ENCODE measurements at regions of chr5 and their contacts with region 1.

Region 1: DNA sequence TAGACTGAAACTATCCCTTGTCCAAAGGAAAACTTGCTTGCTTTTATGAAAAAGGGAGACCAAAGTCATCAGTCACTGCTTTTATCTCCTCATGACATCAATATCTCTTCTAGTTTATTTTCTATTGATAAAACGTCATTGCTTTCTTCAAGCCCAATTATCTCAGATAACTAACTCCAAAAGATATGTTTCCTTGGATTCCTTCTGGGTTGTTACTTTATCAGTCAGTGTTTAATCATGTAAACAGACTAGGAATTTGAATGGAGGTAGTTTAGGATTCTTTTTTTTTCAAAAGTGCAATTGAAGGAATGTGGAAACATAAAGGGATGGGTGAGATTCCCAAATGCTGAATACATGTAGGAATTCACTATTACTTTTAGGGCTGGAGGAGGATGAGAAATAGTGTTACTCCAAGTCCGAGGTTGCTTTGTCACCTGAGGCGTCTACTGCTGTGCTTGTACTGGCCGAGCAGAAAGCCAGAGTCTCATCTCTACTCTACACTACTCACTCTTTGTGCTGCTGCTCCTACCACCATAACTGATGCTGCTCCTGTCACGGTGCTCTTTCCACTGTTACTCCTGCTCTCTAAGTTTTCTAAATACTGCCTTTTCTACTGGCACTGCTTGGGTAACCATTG is 1697.1 kb upstream of the NUDT12 start:
- DNase-seq: peak; percentile 3 to 34
- H3K4me3 ChIP-seq: no peak overlapping the region
- H3K4me3 Mint-ChIP-seq: peak overlapping the region; percentile 1
- H3K27ac Mint-ChIP-seq: no peak overlapping the region
- H3K4me1 ChIP-seq: peaks cover 15% of the 10 kb centered on the region
- H3K4me1 Mint-ChIP-seq: peaks cover 21% of the 10 kb centered on the region
- H3K27me3 ChIP-seq: no peaks in the 10 kb centered on the region
- H3K27me3 Mint-ChIP-seq: no peaks in the 10 kb centered on the region
- CTCF ChIP-seq: no peak

Region 2: DNA sequence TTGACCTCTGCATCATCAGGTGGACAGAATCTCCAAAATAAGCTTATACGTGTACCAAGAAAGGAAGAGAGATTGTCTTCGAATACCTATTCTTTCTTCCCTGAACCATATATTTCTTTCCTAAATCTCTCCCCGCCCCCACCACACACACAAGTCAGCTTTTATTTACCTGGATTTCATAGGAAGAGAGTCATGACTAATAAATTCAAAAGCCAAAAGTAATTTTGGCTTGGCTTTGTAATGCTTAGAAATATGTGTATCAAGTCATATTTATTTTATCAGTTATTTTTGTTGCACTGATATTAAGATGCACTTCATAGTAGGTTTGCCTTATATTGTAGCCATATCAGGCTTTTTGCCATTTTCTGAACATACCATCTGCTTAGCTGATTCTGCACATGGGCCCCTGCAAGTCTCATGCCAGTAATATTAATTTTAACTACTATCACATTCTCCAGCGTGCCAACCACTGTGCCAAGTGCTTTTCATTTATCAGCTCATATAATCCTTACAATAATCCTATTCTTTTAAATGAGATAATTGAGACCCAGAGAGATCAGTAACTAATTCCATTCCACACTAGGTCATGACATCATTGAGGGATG is 291.8 kb before region 1 on chr5:
- CTCF ChIA-PET with region 1: no interaction called
- POLR2A ChIA-PET with region 1: no interaction called
- intact Hi-C with region 1: no loop called
- DNase-seq: no peak
- H3K4me3 ChIP-seq: no peak overlapping the region
- H3K4me3 Mint-ChIP-seq: no peak overlapping the region
- H3K27ac Mint-ChIP-seq: no peak overlapping the region
- H3K4me1 ChIP-seq: no peaks in the 10 kb centered on the region
- H3K4me1 Mint-ChIP-seq: no peaks in the 10 kb centered on the region
- H3K27me3 ChIP-seq: no peaks in the 10 kb centered on the region
- H3K27me3 Mint-ChIP-seq: no peaks in the 10 kb centered on the region
- CTCF ChIP-seq: no peak

Region 3: DNA sequence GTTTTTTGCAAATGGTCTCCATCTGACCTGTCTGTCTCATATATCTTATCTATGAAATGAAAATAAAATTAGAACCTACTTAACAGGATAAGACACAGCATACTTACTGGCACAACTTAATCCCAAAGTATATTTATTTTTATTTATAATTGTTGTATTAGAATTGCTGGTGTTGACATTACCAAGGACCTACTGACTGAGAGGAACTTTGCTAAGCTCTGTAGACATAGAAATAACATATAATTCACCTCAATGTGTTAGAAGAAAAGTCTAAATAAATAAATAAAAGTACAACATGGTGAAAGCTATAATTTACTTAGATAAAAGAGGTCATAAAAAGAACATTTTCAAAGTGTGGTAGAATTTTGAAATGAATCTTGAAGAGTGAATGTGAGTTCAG is 46.6 kb before region 1 on chr5:
- CTCF ChIA-PET with region 1: no interaction called
- POLR2A ChIA-PET with region 1: no interaction called
- intact Hi-C with region 1: loop called (anchors 1 kb)
- DNase-seq: no peak
- H3K4me3 ChIP-seq: no peak overlapping the region
- H3K4me3 Mint-ChIP-seq: no peak overlapping the region
- H3K27ac Mint-ChIP-seq: no peak overlapping the region
- H3K4me1 ChIP-seq: no peaks in the 10 kb centered on the region
- H3K4me1 Mint-ChIP-seq: no peaks in the 10 kb centered on the region
- H3K27me3 ChIP-seq: no peaks in the 10 kb centered on the region; the same call in 1 of the 2 replicates
- H3K27me3 Mint-ChIP-seq: peaks cover 24% of the 10 kb centered on the region
- CTCF ChIP-seq: no peak

Region 4: GRCh38 chr5:105230516-105231157 is 29.1 kb before region 1 on chr5:
- CTCF ChIA-PET with region 1: no interaction called
- POLR2A ChIA-PET with region 1: no interaction called
- intact Hi-C with region 1: loop called (anchors 1 kb)
- DNase-seq: peak; percentile 18 to 39
- H3K4me3 ChIP-seq: no peak overlapping the region
- H3K4me3 Mint-ChIP-seq: no peak overlapping the region
- H3K27ac Mint-ChIP-seq: no peak overlapping the region
- H3K4me1 ChIP-seq: peaks cover 17% of the 10 kb centered on the region; the same call in 1 of the 2 replicates
- H3K4me1 Mint-ChIP-seq: peaks cover 12% of the 10 kb centered on the region
- H3K27me3 ChIP-seq: no peaks in the 10 kb centered on the region
- H3K27me3 Mint-ChIP-seq: no peaks in the 10 kb centered on the region
- CTCF ChIP-seq: no peak

Measured in Caco-2 (cell line).